ENCODE measurements at regions of chr3 and their contacts with region 1.

Region 1: DNA sequence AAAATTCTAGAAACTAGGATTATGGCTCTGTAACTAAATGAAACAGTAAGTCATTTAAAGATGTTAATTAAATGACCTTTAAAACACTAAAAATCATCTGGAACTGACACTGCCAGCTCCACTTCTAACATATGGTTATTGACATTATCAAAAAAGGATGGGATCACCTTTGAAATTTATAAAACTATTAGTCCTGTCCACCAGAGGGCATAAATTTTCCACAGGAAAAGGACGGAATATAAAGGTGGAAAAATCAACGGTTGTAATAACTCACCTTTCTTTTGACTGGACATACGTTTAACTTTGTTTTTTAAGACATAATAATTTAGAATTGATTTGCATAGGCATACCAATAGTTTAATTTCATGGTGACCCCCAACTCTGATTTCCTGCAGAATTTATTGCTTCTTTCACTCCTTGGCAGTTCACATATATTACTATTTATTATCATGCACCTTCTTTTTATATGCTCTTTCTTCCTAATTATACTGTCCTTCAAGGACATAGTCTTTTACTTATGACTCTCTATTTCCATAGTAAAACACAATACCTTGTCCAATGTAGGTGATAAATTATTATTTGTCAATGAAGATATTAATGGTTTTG is 345.7 kb downstream of the CADM2 start:
- DNase-seq: no peak
- ATAC-seq: no peak
- H3K4me3 ChIP-seq: no peak overlapping the region
- H3K27ac ChIP-seq: no peak overlapping the region
- H3K4me1 ChIP-seq: no peaks in the 10 kb centered on the region
- H3K27me3 ChIP-seq: no peaks in the 10 kb centered on the region
- CTCF ChIP-seq: peak in 2 of 12 donors; percentile 11 to 23
- POLR2A ChIP-seq: no peak

Region 2: DNA sequence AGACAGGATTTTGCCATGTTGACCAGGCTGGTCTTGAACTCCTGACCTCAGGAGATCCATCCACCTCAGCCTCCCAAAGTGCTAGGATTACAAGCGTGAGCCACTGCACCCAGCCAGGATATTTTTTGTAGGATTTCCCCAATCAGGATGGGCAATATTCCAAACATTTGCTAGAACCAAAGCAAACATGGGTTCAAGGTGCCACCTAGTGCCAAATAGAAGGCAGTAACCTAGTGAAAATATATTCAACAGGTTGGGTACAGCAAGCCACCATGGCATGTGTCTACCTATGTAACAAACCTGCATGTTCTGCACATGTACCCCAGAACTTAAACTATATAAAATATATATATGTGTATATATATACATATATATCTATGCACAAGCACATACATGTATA is 531.6 kb before region 1 on chr3:
- intact Hi-C with region 1: no loop called
- DNase-seq: no peak
- ATAC-seq: no peak
- H3K4me3 ChIP-seq: no peak overlapping the region
- H3K27ac ChIP-seq: no peak overlapping the region
- H3K4me1 ChIP-seq: no peaks in the 10 kb centered on the region
- H3K27me3 ChIP-seq: no peaks in the 10 kb centered on the region
- CTCF ChIP-seq: peak in 3 of 12 donors; percentile 4 to 22 (median 10)
- POLR2A ChIP-seq: no peak

Region 3: GRCh38 chr3:85455561-85456196 is 151.2 kb after region 1 on chr3:
- intact Hi-C with region 1: no loop called
- DNase-seq: no peak
- ATAC-seq: no peak
- H3K4me3 ChIP-seq: no peak overlapping the region
- H3K27ac ChIP-seq: no peak overlapping the region
- H3K4me1 ChIP-seq: no peaks in the 10 kb centered on the region
- H3K27me3 ChIP-seq: no peaks in the 10 kb centered on the region
- CTCF ChIP-seq: no peak
- POLR2A ChIP-seq: no peak

Region 4: DNA sequence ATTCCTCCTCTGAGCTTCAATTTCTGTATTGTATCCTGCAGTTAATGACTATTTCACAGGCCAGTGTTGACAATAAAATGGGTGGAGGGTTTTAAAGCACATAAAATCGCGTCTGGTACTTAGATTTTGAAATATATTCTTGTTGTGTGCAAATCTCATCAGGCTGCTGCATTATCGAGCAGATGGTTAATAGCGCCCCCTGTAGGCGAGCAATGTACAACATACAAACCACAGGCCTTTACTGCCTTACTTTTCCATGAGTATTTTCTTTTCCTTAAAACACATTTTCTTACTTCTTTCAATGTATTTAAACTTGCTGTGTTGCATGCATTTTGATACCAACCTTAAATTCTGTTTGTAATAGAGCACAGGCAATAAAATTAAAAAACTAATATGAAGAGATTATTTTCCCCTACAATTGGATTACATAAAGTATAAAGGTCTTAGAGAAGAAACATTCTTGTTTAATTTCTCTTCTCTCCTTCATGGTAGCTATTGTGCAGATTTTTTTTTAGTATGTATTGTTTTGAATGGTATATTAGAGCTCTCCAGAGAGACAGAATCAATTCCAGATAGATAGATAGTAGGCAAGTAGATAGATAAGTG is 262.7 kb after region 1 on chr3:
- intact Hi-C with region 1: loop called in 2 of 10 experiments (anchors 5 kb)
- DNase-seq: peak in 3 of 5 donors; percentile 8 to 52 (median 35)
- ATAC-seq: no peak
- H3K4me3 ChIP-seq: no peak overlapping the region
- H3K27ac ChIP-seq: no peak overlapping the region
- H3K4me1 ChIP-seq: no peaks in the 10 kb centered on the region
- H3K27me3 ChIP-seq: no peaks in the 10 kb centered on the region
- CTCF ChIP-seq: peak; percentile 33 to 68 (median 58)
- POLR2A ChIP-seq: no peak

Region 5: GRCh38 chr3:85576091-85576690 is 271.7 kb after region 1 on chr3:
- intact Hi-C with region 1: loop called in 1 of 10 experiments (anchors 5 kb)
- DNase-seq: peak in 4 of 5 donors; percentile 18 to 43 (median 38)
- ATAC-seq: no peak
- H3K4me3 ChIP-seq: no peak overlapping the region
- H3K27ac ChIP-seq: no peak overlapping the region
- H3K4me1 ChIP-seq: no peaks in the 10 kb centered on the region
- H3K27me3 ChIP-seq: no peaks in the 10 kb centered on the region
- CTCF ChIP-seq: peak; percentile 75 to 95 (median 88)
- POLR2A ChIP-seq: no peak